A549 (cell line): ENCODE measurements at regions of chr22 and their contacts with region 1.

Region 1: DNA sequence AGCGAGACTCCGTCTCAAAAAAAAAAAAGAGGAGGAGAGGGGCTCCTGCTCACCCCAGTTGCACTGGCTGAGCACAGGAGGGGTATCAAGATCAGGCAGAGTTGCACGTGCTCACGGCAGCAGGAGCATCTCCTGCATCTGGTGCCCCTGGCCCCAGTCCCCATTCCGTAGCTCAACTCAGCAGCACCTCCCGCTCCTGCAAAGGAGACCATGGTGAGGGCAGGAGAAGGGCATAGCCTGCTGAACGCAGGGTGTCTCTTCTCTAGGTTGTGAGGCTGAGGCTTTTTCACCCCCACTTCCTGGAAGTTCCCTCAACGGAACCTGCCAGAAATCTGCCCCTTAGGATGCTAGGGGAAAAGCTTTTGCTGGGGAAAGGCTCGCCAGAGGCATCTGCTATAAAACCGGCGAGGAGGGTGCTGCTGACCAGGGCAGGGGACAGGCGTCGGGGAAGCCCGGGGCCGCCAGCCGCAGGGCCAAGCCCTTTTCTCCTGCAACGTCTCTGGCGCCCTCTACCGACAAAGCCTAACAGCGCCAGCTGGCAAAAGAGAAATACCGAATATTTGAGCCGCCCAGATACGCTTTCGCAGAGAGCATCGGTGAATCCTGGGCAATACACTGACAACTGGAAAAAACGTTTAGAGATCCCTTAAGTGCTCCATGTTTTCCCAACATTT is 1.0 kb upstream of the PPP6R2 start:
- DNase-seq: peak; percentile 35 to 83
- ATAC-seq: peak; percentile 79 to 89
- H3K4me3 ChIP-seq: peak overlapping the region; percentile 88
- H3K27ac ChIP-seq: peak overlapping the region; percentile 74 to 100
- H3K4me1 ChIP-seq: no peaks in the 10 kb centered on the region
- CTCF ChIP-seq: peak; percentile 87
- EP300 ChIP-seq: no peak
- POLR2A ChIP-seq: no peak
- RAD21 ChIP-seq: peak; percentile 81 to 86

Region 2: DNA sequence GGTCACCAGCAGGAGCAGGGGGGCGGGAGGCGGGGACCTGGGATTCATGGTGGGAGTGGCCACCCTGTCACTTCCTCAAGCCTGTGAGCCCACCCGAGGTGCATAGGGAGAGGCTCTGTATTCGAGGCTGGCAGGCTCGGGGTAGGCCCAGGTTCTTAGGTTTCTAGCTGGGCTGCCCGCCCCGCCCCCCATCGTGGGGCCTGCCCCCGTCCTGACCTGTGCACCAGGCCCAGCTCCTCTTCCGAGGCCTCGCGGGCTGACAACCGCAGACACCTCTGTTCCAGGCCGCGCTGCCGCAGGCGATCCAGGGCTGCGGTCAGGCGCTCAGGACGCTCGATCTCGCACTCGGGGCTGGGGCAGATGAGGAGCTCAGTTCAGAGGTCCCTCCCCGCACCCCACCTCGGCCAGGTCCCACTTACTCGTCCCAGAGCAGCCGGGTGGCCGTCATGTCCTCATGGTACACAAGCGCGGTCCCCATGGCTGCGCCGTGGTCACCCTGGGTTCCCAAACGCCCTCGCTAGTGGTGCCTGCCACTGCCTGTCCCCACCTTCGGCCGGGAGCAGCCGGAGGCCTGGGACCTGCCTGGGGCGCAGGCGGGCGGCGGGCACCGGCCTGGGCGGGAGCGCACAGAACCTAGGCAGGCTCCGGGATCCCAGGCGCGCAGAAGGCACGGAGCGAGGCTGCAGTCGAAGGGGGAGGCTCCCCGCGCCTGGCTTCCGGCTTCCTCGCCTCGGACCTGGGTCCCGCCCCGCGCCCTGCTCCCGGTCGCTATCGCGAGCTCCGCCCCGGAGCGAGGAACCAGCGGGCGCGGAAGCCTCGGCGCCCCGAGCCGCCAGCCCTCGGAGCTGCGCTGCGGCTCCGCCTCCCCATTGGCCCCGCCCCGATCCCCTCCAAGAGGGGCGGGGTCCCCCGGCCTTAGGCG is 91.3 kb before region 1 on chr22 and contains the start of gene HDAC10:
- CTCF ChIA-PET with region 1: interaction called, 50 read pairs
- POLR2A ChIA-PET with region 1: interaction called, 3 read pairs
- DNase-seq: peak in 1 of 2 experiments; percentile 43
- ATAC-seq: peak; percentile 46 to 71
- H3K4me3 ChIP-seq: peak within 1 kb of the TSS; percentile 53
- H3K27ac ChIP-seq: peak within 1 kb of the TSS; percentile 76 to 93
- H3K4me1 ChIP-seq: peaks cover 17% of the 10 kb centered on the region; the same call in 2 of the 3 replicates
- CTCF ChIP-seq: no peak
- EP300 ChIP-seq: no peak
- POLR2A ChIP-seq: no peak; the same call in 1 of the 2 replicates
- RAD21 ChIP-seq: no peak
- polyA plus RNA-seq, gene HDAC10: 2.4 and 2.5 TPM in 2 replicates

Region 3: DNA sequence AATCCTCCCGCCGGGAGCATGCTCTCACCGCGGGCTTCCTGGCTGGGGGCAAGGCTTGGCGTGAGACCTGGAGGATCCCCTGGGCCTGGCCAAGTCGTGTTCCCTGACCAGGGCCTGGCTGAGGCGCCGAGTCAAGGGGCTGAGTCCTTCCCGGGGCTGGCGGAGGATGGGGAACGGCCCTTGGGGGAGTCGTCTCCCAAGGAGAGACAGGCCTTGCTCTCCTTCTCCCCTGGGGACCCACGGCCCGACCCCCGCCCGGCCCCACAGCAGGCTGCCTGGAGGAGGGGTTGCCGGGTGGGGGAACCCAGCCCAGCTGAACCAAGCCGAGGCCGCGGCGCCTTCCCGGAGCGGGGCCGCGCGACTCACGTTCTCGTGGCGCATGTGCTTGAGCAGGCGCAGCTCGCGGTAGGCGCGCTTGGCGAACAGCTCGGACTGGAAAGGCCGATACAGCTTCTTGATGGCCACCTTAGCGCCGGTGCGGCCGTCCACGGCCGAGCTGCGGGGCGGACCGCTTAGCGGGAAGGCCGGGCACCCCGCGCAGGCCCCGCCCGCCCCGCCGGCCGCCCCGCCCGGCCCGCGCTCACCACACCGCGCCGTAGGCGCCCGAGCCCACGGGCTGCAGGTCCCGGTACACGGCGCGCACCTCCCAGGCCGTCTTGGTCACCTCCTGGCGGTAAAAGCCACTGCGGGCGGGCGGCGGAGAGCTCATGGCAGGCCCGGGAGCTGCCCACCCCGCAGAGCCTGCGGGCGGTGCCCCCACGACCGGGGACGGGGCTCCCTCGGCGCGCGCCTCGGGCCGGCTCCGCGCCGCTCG is 81.1 kb before region 1 on chr22:
- CTCF ChIA-PET with region 1: interaction called, 11 read pairs
- POLR2A ChIA-PET with region 1: no interaction called
- DNase-seq: peak in 1 of 2 experiments; percentile 72
- ATAC-seq: peak; percentile 40 to 68
- H3K4me3 ChIP-seq: peak overlapping the region; percentile 90
- H3K27ac ChIP-seq: peak overlapping the region; percentile 98 to 99
- H3K4me1 ChIP-seq: peaks cover 23% of the 10 kb centered on the region
- CTCF ChIP-seq: no peak
- EP300 ChIP-seq: no peak
- POLR2A ChIP-seq: peak; percentile 45
- RAD21 ChIP-seq: no peak

Region 4: DNA sequence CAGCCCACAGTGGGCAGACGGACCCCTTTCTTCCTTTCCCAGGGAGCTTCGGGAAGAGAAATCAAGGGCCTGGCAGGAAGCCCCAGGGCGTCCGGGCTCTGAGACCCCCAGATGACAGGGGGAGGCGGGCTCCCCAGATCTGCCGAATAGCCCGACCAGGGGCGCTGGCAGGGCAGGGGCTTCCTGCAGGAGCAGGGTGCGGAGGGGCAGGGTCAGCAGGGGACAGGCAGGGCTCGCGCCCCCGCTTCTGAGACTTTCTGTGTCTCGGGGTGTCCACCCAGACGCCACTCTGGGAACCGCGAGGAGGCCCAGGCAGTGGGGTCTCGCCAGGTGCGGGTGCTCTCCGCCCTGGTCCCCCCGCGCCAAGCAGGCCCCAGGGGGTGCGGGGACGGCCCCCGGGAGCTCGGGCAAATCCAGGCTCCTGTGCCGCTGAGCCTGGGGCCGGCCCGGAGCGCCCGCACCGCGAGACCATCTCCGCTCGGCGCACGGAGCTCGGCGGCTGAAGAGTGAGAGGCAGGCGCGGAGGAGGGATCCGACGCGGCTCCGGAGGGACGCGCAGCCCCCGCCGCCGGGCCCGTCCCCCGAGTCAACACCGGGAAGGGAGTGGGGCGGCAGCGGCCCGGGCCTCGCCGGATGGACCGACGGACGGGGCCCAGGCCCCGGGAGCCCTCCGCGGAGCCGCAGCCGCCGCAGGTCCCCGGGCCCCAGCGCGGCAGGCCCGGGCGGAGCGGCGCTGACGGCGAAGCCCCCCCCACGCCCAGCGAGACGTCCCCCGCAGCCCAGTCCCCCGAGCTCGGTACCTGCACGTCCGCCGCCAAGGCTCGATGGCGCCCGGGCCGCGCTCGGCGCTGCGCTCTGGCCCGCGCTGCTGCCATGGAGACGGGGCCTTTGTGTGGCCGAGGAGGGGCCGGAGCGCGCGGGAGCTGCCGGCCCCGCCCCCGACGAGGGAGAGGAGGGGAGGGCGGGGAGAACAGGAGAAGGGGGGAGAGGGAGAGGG is 35.1 kb before region 1 on chr22 and contains the start of gene PLXNB2:
- CTCF ChIA-PET with region 1: interaction called, 13 read pairs
- POLR2A ChIA-PET with region 1: no interaction called
- DNase-seq: peak; percentile 40 to 77
- ATAC-seq: no peak
- H3K4me3 ChIP-seq: peak within 1 kb of the TSS; percentile 100
- H3K27ac ChIP-seq: peak within 1 kb of the TSS; percentile 98 to 100
- H3K4me1 ChIP-seq: peaks cover 48% of the 10 kb centered on the region
- CTCF ChIP-seq: no peak
- EP300 ChIP-seq: no peak
- POLR2A ChIP-seq: peak; percentile 53
- RAD21 ChIP-seq: no peak
- polyA plus RNA-seq, gene PLXNB2: 24.6 and 32.4 TPM in 2 replicates

Region 5: DNA sequence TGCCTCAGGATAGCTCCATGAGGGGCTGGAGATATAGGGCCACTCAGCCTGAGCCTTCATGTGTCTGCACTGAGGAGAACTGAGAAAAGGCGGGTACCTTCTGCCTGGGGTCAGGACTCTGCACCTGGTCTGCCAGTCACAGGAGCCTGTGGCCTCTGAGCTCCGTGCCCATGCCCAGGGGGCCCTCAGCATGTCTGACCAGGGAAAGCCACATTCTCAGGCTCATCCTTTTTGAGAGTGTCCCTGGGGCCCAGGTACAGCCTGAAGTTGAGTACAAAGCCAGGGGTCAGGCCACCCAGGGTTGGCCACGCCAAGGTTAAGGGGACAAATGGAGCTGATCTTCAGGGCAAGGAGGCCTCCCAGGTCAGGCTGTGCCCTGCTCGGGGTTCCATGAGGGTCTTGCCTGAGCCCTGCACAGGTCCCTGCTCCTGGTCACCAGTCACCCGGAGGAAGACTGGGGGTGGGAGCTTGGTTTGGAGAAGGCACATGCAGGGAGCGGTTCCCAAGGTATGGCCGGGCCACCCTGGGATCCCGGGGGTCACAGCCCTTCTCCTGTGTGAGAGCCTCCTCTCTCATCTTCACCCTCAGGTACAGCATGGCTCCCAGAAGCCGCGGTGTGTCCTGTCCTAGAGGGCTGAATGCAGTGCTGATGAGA is 21.3 kb before region 1 on chr22:
- CTCF ChIA-PET with region 1: interaction called, 31 read pairs
- POLR2A ChIA-PET with region 1: no interaction called
- DNase-seq: no peak
- ATAC-seq: no peak
- H3K4me3 ChIP-seq: no peak overlapping the region
- H3K27ac ChIP-seq: no peak overlapping the region
- H3K4me1 ChIP-seq: 0 out of 3 replicates have a peak, but pooled peaks cover 2% of the 10 kb centered on the region
- CTCF ChIP-seq: no peak
- EP300 ChIP-seq: no peak
- POLR2A ChIP-seq: no peak
- RAD21 ChIP-seq: no peak